Tibial artery (tissue), 4 donors: ENCODE measurements at regions of chr18 and their contacts with region 1.

Region 1: GRCh38 chr18:59459369-59460079 is 100.5 kb upstream of the LMAN1 start:
- DNase-seq: no peak
- H3K4me3 ChIP-seq: no peak overlapping the region
- H3K27ac ChIP-seq: no peak overlapping the region
- H3K4me1 ChIP-seq: no peaks in the 10 kb centered on the region
- H3K27me3 ChIP-seq: peaks cover 0 to 20% of the 10 kb centered on the region in 2 donors
- CTCF ChIP-seq: peak; percentile 50 to 70

Region 2: GRCh38 chr18:59823596-59824195 is 364.2 kb after region 1 on chr18:
- intact Hi-C with region 1: loop called (anchors 1 kb)
- DNase-seq: peak; percentile 72 to 80
- H3K4me3 ChIP-seq: no peak overlapping the region
- H3K27ac ChIP-seq: no peak overlapping the region
- H3K4me1 ChIP-seq: no peaks in the 10 kb centered on the region
- H3K27me3 ChIP-seq: peaks cover 0 to 10% of the 10 kb centered on the region in 2 donors
- CTCF ChIP-seq: peak; percentile 71 to 79